Activated naive CD4-positive, alpha-beta T cell treated with anti-CD3 and anti-CD28 coated beads, Interleukin-2, amount 10 ng/mL, durations not matched to agents 7 days and 5 days (primary cell): ENCODE measurements at regions of chr18 and their contacts with region 1.

Region 1: GRCh38 chr18:74081966-74082741 is 65.5 kb downstream of the FBXO15 start:
- DNase-seq: peak; percentile 84
- H3K4me3 Mint-ChIP-seq: peak overlapping the region; percentile 55
- H3K27ac Mint-ChIP-seq: peak overlapping the region; percentile 88
- H3K4me1 Mint-ChIP-seq: peaks cover 18% of the 10 kb centered on the region
- H3K27me3 Mint-ChIP-seq: no peaks in the 10 kb centered on the region

Region 2: GRCh38 chr18:74040459-74041332 is 41.5 kb before region 1 on chr18:
- CTCF ChIA-PET with region 1: interaction called, 23 read pairs
- DNase-seq: peak; percentile 80
- H3K4me3 Mint-ChIP-seq: no peak overlapping the region
- H3K27ac Mint-ChIP-seq: no peak overlapping the region
- H3K4me1 Mint-ChIP-seq: no peaks in the 10 kb centered on the region
- H3K27me3 Mint-ChIP-seq: no peaks in the 10 kb centered on the region

Region 3: DNA sequence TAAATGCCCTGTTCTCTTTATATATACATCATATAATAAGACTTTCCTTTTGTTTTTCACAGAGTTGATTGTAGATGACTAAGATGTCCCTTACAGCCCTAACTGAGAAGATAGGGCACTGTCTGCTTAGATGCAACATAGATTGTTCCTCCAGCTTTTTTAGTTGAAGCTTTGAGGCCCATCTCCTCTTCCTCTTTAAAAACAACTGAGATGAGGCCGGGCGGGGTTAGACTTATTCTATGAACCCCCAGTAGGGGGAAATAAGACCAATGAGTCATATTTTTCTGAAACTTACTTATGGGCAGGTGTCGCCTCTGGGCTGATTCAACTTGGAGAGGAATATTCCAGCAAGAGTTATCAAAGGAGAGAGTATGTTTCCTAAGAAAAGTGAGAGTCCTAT is 19.1 kb before region 1 on chr18:
- CTCF ChIA-PET with region 1: interaction called, 74 read pairs
- DNase-seq: peak; percentile 53
- H3K4me3 Mint-ChIP-seq: no peak overlapping the region
- H3K27ac Mint-ChIP-seq: peak overlapping the region; percentile 71
- H3K4me1 Mint-ChIP-seq: peaks cover 43% of the 10 kb centered on the region
- H3K27me3 Mint-ChIP-seq: no peaks in the 10 kb centered on the region

Region 4: GRCh38 chr18:74097598-74098202 is 15.5 kb after region 1 on chr18:
- CTCF ChIA-PET with region 1: interaction called, 17 read pairs
- DNase-seq: no peak
- H3K4me3 Mint-ChIP-seq: no peak overlapping the region
- H3K27ac Mint-ChIP-seq: no peak overlapping the region
- H3K4me1 Mint-ChIP-seq: peaks cover 4% of the 10 kb centered on the region
- H3K27me3 Mint-ChIP-seq: peaks cover 8% of the 10 kb centered on the region

Region 5: GRCh38 chr18:74116633-74117554 is 34.7 kb after region 1 on chr18:
- CTCF ChIA-PET with region 1: interaction called, 75 read pairs
- DNase-seq: peak; percentile 54
- H3K4me3 Mint-ChIP-seq: no peak overlapping the region
- H3K27ac Mint-ChIP-seq: no peak overlapping the region
- H3K4me1 Mint-ChIP-seq: peaks cover 9% of the 10 kb centered on the region
- H3K27me3 Mint-ChIP-seq: no peaks in the 10 kb centered on the region